Heart left ventricle (tissue), 16 donors: ENCODE measurements at regions of chr3 and their contacts with region 1.

Region 1: DNA sequence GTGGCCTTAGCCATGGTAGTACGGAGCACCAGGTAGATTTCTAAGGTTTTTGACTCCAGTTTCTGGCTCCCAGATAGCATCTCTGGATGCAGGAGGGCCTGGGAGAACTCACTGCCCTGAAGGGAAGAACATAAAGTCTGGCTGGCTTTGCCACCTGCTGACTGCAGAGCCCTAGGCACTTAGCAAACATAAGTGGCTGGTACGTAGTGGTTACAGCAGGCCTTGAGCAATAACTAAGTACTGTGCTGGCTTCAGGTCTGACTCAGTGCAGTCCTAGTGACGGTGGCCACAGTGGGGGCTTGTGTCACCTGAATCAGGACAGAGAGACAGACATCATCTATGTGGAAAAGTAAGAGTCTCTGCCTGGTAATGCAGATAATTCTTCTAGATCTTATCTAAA is 871.1 kb downstream of the PDCD6IP start:
- DNase-seq: peak in 1 of 5 donors; percentile 50
- ATAC-seq: no peak
- H3K4me3 ChIP-seq: no peak overlapping the region
- H3K27ac ChIP-seq: no peak overlapping the region
- H3K4me1 ChIP-seq: no peaks in the 10 kb centered on the region
- H3K27me3 ChIP-seq: no peaks in the 10 kb centered on the region
- CTCF ChIP-seq: no peak
- POLR2A ChIP-seq: no peak

Region 2: GRCh38 chr3:32698506-32698905 is 1971.0 kb before region 1 on chr3:
- intact Hi-C with region 1: no loop called
- DNase-seq: no peak
- ATAC-seq: no peak
- H3K4me3 ChIP-seq: no peak overlapping the region
- H3K27ac ChIP-seq: peak overlapping the region in 1 of 12 donors; percentile 52
- H3K4me1 ChIP-seq: peaks cover 0 to 39% (median 0%) of the 10 kb centered on the region in 12 donors
- H3K27me3 ChIP-seq: no peaks in the 10 kb centered on the region
- CTCF ChIP-seq: no peak
- POLR2A ChIP-seq: no peak

Region 3: DNA sequence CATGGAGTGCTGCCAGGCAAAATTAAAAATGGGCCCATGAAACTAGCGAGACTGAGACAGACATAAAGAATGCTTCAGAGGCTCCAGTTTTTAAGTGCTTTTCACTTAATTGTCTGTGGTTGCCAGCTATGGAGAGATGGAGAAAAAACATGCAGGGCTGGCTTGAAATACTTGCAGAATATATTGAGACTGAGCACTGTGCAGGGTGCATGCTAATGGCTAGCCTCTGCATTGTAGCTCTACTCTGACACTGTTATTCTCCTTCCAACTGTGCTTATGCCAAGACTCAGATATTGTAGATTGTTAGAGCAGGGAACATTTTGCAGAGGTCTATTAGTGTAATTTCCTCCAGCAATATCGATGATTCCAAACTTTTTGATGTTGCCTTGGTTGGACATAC is 136.0 kb before region 1 on chr3:
- intact Hi-C with region 1: no loop called
- DNase-seq: no peak
- ATAC-seq: no peak
- H3K4me3 ChIP-seq: no peak overlapping the region
- H3K27ac ChIP-seq: no peak overlapping the region
- H3K4me1 ChIP-seq: peaks cover 0 to 4% (median 0%) of the 10 kb centered on the region in 12 donors
- H3K27me3 ChIP-seq: no peaks in the 10 kb centered on the region
- CTCF ChIP-seq: no peak
- POLR2A ChIP-seq: no peak

Region 4: DNA sequence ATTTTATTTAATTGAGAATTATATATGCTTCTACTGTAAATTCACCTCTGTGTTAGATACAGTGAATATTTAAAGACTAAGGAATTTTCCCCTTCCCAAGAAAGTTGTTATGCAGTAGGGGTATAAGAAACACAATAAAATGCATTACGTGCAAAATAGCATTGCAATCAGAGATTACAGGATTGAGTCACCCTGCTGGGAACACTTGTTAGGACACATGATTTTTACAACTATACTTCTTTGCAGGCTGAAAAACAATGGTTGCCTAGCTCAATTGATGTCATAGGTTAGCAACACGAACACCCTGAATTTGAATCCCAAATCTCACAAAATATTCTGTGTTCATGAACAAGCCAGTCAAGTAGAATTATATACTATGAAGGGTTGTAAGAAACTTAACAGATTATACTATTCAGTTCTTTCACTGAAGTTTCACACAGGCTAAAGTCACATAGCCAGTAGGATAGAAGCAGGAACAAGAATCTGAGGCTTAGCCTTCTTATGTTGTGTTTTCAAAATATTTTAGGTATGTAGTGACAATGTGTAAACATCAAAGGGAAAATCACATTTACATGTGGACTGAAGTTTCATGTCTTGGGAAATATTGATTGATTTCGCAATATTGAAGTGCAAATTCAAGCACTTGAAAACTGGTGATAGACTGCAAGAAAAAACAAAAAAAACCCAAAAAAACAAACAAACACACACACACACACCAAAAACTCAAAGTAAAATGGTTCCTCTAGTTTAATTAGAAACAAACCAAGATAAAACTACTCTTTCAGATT is 98.0 kb before region 1 on chr3:
- intact Hi-C with region 1: loop called in 1 of 10 experiments (anchors 5 kb)
- DNase-seq: no peak
- ATAC-seq: no peak
- H3K4me3 ChIP-seq: no peak overlapping the region
- H3K27ac ChIP-seq: no peak overlapping the region
- H3K4me1 ChIP-seq: peaks cover 0 to 5% (median 0%) of the 10 kb centered on the region in 12 donors
- H3K27me3 ChIP-seq: peaks cover 0 to 12% (median 0%) of the 10 kb centered on the region in 9 donors
- CTCF ChIP-seq: no peak
- POLR2A ChIP-seq: no peak